ENCODE measurements at regions of chr1 and their contacts with region 1.

Region 1: DNA sequence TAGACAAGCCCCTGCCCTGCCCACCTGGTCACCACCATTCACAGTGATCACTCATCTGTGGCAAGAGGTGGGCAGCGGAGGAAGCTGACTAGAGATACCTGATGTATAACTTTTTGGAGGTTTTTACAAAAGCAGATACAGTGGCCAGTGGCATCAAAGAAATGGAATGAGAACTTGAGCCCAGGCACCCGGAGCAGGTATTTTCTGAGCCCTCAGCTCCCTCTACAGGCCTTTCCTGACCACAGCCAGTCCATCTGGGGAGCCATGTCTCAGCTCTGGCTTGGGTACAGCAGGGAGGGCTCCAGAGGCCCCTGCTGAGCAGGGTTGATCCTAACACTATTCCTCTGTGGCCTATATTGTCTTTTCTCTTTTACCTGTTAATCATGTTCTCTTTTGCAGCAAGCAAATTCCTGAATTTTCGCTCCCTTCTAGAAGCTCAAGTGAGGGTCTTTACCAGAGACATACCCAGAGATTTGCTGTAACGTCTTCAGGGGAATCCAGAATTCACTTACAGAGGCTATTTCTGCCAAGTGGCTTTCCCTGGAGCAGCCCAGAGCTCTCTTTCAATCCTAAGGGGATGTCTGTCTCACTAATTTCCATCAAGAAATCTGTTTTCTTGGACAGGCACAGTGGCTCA is 27.3 kb downstream of the GPR157 start:
- DNase-seq: no peak
- ATAC-seq: peak; percentile 64

Region 2: DNA sequence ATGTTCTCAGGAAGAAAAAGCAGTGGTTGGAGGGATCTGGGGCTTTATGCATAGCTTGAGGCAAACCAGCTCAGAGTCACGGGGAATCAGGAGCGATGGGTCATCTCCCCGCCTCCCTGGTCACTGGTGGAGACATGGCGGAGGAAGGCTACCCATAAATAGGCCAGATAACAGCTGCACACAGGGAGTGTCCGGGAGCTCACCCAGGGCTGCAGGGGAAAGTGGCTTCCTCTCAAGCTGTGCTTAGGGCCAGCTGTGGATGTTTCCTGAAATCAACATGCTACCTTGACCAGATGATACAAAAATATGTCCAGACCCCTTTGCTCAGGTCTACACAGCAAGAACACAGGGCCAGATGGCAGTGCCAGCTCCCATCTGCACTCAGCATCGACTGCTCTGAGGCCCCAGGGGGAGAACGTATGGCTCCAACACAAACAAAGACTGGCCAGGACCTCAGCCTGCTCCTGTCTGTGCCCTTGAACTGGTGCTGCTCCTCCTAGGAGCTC is 257.1 kb before region 1 on chr1:
- intact Hi-C with region 1: no loop called
- DNase-seq: no peak
- ATAC-seq: peak; percentile 45

Region 3: DNA sequence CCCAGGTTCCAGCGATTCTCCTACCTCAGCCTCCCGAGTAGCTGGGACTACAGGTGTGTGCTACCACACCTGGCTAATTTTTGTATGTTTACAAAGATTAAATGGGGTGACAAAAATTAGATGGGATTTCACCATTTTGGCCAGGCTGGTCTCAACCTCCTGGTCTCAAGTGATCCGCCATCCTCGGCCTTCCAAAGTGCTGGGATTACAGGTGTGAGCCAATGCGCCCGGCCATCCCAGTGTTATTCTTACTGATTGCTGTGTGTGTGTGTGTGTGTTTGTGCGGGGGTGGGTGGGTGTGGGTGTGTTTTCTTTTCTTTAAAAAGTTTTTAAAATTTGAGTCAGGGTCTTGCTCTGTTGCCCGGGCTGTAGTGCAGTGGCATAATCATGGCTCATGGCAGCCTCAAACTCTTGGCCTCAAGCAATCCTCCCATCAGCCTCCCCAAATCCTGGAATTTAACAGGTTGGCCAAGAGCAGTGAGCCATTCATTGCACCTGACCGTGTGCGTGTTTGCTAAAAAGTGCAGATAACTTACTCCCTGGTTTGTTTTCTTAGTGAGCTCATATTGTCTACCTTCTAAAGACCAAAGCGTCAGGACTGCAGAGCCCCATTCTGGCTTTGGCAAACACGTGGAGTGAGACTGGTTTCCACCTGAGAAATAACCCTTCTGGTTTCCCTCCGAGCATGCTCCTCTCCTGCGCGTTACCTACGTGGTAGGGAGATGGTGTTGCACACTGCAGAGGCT is 188.3 kb before region 1 on chr1:
- intact Hi-C with region 1: loop called (anchors 5 kb)
- DNase-seq: no peak
- ATAC-seq: no peak

Region 4: GRCh38 chr1:9174243-9174642 is 72.6 kb after region 1 on chr1:
- intact Hi-C with region 1: no loop called
- DNase-seq: no peak
- ATAC-seq: no peak

Measured in Right ventricle myocardium inferior (tissue), 1 donor.